ENCODE measurements at regions of chr1 and their contacts with region 1.

Region 1: DNA sequence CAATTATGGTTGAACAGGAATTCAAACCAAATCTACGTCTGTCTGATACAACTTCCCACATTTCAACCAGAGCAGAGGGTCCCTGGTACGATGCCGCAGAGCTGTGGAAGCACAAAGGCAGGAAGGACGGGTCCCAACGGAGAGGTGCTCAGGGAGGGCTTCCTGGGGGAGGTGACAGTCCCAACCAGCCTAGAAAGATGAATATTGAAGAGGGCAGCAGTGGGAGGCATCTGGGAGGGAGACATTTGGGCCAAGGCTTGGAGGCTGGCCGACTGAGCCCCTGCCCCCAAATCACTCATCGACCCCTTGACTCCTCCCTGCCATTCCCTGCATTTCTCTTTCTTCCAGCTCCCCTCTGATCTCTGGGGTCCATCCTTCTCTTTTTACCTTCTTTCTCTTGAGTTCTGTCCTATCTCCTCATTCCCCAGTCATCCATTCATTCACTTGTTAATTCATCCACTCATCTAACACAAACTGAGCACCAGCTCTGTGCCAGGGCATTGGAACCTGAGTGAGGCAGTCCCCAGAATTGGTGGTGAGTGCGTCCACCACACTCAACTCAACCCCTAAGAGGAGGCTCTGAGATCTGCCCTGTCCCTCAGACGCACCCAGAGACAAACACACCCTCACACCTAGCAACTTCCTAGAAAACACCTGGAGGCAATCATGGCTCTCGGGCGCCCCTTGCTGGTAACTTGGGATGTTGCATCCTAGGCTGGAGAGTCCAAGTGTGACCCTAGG is 13.2 kb upstream of the CELA3B start:
- DNase-seq: peak; percentile 70
- H3K4me3 ChIP-seq: no peak overlapping the region
- H3K27ac ChIP-seq: no peak overlapping the region
- H3K4me1 ChIP-seq: no peaks in the 10 kb centered on the region
- CTCF ChIP-seq: peak; percentile 93

Region 2: GRCh38 chr1:21659099-21659923 is 304.3 kb before region 1 on chr1:
- CTCF ChIA-PET with region 1: no interaction called
- POLR2A ChIA-PET with region 1: no interaction called
- intact Hi-C with region 1: loop called (anchors 5 kb)
- DNase-seq: peak; percentile 65
- H3K4me3 ChIP-seq: no peak overlapping the region
- H3K27ac ChIP-seq: no peak overlapping the region
- H3K4me1 ChIP-seq: no peaks in the 10 kb centered on the region
- CTCF ChIP-seq: peak; percentile 84

Region 3: DNA sequence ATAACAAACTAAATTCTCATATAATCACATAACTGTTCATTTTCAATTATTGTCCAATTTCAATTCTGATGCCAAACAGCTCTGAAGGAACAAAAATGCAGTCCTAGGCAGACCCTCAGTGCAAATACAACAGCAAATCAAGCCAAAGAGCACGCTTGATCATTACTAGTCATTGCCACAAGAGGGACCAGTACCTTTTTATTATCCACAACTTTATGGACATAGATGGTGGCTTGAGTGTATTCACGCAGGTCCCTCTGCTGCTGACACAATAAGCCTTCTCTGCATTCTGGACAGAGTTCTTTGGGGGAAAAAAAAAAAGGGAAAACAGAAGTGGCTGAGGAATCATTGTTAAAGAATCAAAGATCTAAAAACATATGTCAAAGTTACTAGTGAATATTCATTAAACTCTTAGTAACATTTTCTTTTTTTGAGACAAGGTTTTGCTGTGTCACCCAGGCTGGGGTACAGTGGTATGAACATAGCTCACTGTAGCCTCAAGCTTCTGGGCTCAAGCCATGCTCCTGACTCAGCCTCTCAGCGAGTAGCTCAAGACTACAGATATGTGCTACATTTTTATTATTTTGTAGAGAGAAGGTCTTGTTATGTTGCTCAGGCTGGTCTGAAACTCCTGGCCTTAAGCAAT is 260.2 kb before region 1 on chr1:
- CTCF ChIA-PET with region 1: no interaction called
- POLR2A ChIA-PET with region 1: interaction called, 4 read pairs
- intact Hi-C with region 1: loop called (anchors 1 kb)
- DNase-seq: peak; percentile 63
- H3K4me3 ChIP-seq: no peak overlapping the region
- H3K27ac ChIP-seq: no peak overlapping the region
- H3K4me1 ChIP-seq: no peaks in the 10 kb centered on the region
- CTCF ChIP-seq: peak; percentile 81

Region 4: DNA sequence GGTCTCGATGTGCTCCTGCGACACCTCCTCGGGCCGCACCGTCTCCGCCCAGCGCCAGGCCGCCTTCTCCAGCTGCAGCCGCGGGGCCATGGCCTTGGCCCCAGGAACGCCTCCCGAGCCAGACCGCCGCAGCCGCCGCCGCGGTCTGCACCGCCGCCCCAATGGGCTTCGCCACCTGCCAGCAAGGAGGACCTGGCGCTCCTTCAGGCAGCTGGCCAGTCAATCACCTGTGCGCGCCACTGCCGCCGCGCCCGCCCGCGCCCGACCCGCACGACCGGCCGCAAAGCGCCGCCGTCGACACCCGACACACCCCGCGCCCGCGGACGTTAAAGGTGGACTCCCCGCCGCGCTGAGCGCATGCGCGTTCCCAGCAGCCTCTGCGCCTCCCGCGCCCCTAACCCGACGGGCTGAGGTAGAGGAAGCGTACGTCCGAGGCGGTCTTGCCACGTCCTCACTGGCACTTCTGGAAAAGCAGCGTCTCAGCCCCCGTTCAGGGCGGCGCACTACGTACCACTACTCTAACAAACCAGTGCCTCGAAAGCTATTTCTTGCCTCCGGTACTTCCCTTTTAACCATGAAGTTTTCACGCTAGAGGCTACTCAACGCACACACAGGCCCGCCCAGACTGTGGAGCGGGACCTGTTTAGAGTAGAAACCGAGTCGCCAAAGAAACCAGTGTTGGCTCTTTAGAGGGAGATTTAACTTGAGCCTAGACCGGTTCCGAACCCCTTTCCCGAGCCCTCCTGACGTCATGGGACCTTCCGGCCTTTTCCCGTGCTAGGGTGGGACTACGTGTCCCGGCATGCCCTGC is 180.6 kb before region 1 on chr1 and contains the start of gene USP48:
- CTCF ChIA-PET with region 1: no interaction called
- POLR2A ChIA-PET with region 1: interaction called, 3 read pairs
- intact Hi-C with region 1: loop called (anchors 2 kb)
- DNase-seq: peak; percentile 99
- H3K4me3 ChIP-seq: peak within 1 kb of the TSS; percentile 85
- H3K27ac ChIP-seq: peak within 1 kb of the TSS; percentile 94
- H3K4me1 ChIP-seq: peaks cover 21% of the 10 kb centered on the region
- CTCF ChIP-seq: no peak; the same call in 1 of the 2 replicates
- total RNA-seq, gene USP48: 45.0 and 56.0 TPM in 2 replicates

Region 5: GRCh38 chr1:21811875-21812305 is 151.8 kb before region 1 on chr1 and contains the start of gene LDLRAD2:
- CTCF ChIA-PET with region 1: no interaction called
- POLR2A ChIA-PET with region 1: no interaction called
- intact Hi-C with region 1: no loop called
- DNase-seq: no peak
- H3K4me3 ChIP-seq: no peak within 1 kb of the TSS
- H3K27ac ChIP-seq: no peak within 1 kb of the TSS
- H3K4me1 ChIP-seq: no peaks in the 10 kb centered on the region
- CTCF ChIP-seq: no peak
- total RNA-seq, gene LDLRAD2: not detected in 2 replicates

Region 6: DNA sequence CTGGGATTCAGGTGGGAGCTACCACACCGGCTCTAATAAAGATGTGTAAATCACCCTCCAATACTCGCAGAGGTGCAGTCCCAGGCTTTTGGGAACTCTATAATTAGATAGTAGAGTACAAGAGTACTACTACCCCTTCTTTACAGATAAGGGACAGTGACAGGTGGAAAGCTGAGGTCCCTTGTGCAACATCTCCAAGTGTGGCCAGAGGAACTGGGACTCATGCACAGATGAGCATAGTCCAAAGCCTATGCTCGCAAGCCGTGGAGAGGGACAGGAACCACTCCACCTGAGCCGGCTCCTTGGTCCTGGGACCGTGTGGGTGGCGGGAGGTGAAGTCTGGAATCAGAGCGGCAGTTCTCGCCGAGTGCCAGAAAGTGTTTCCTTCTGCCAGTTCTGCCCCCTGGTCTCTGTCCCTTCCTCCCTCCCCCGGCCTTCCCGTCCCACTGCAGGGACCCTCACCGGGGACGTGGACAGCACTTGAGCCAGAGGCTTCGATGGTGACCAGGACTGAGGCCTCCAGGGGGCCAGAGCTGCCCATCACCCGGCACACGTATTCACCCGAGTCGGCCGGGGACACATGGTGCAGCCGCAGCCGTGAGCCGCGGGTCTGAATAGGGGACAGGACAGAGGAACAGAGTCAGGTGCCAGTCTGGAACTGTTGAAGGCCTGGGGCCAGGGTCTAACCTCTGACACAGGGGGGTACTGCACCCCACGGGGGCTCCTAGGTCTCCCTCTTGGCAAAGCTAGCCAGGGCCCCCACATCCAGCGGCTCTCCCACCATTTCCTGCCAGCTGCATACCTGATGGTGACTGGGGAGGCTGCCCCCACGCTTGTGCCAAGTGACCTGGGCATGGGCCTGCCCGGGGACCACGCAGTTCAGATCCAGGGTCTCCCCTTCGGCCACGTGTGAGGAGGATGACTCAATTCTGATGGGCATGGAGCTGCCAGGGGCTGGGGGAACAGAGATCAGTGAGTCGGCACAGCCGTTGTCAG is 117.7 kb before region 1 on chr1:
- CTCF ChIA-PET with region 1: no interaction called
- POLR2A ChIA-PET with region 1: no interaction called
- intact Hi-C with region 1: loop called (anchors 10 kb)
- DNase-seq: no peak
- H3K4me3 ChIP-seq: no peak overlapping the region
- H3K27ac ChIP-seq: no peak overlapping the region
- H3K4me1 ChIP-seq: no peaks in the 10 kb centered on the region
- CTCF ChIP-seq: no peak

Region 7: GRCh38 chr1:21871974-21872373 is 91.7 kb before region 1 on chr1:
- CTCF ChIA-PET with region 1: no interaction called
- POLR2A ChIA-PET with region 1: no interaction called
- intact Hi-C with region 1: no loop called
- DNase-seq: peak; percentile 32
- H3K4me3 ChIP-seq: no peak overlapping the region
- H3K27ac ChIP-seq: no peak overlapping the region
- H3K4me1 ChIP-seq: peaks cover 17% of the 10 kb centered on the region
- CTCF ChIP-seq: no peak

Region 8: GRCh38 chr1:22064751-22065402 is 101.2 kb after region 1 on chr1:
- CTCF ChIA-PET with region 1: no interaction called
- POLR2A ChIA-PET with region 1: no interaction called
- intact Hi-C with region 1: no loop called
- DNase-seq: no peak
- H3K4me3 ChIP-seq: no peak overlapping the region
- H3K27ac ChIP-seq: no peak overlapping the region
- H3K4me1 ChIP-seq: peaks cover 21% of the 10 kb centered on the region
- CTCF ChIP-seq: no peak